IMR-90 (cell line): ENCODE measurements at regions of chr12 and their contacts with region 1.

Region 1: DNA sequence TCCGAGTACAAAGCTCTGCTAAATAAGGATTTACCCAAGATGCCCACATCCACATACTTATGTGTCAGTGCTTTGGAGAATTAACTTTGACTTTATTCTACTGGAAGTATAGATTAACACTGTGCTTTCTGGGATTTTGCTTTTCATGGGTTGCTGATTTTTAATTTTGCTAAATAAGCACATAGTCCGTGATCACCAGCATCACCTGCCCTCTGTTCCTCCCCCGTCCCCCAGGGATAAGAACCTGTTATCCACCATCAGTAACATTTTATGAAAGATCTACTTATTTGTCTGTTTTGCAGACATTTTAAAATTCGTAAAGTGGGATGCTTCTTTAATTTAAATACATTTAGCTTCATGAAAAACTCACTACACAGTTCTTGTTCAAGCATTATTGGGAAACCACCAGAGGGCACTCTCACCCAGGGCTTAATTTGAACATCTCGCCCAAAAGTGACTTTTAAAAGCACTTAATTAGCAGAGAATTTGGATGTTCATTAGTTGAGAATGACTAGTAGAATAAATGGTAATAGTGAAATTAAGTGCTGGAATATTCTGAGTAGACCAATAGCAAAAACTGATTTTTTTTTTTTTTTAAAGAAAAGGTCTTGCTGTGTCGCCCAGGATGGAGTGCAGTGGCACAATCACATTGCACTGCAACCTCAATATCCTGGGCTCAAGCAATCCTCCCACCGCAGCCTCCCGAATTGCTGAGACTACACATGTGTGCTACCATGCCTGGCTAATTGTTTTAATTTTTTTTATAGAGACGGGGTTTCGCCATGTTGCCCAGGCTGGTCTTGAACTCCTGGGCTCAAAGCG is 35.7 kb downstream of the MRPL42 start:
- DNase-seq: peak; percentile 48
- ATAC-seq: no peak
- H3K4me3 ChIP-seq: no peak overlapping the region
- H3K27ac ChIP-seq: no peak overlapping the region
- H3K4me1 ChIP-seq: 0 out of 2 replicates have a peak, but pooled peaks cover 1% of the 10 kb centered on the region
- H3K27me3 ChIP-seq: no peaks in the 10 kb centered on the region
- CTCF ChIP-seq: peak; percentile 77
- POLR2A ChIP-seq: no peak
- RAD21 ChIP-seq: peak; percentile 85

Region 2: DNA sequence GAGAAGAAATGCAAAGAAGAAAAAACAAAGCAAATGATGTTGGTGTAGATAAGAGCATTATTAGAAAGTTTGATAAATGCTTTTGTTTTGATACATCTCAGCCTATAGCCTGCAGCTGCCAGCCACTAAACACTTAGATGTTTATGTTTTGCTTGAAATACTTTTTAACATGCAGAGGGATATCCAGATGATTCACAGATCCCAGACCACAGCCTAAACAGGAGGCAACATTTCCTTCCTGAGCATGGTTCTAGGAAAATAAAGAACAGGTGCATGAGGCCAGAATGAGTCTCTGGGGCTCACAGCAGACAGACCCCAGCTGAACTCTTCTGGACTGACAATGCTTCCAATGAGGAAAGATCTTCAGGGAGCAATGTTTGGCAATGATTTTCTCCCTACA is 470.3 kb before region 1 on chr12:
- CTCF ChIA-PET with region 1: no interaction called
- POLR2A ChIA-PET with region 1: no interaction called
- dilution Hi-C with region 1: no loop called
- in situ Hi-C with region 1: no loop called
- intact Hi-C with region 1: no loop called
- DNase-seq: peak; percentile 63
- ATAC-seq: peak; percentile 51
- H3K4me3 ChIP-seq: no peak overlapping the region
- H3K27ac ChIP-seq: no peak overlapping the region
- H3K4me1 ChIP-seq: no peaks in the 10 kb centered on the region
- H3K27me3 ChIP-seq: peaks cover 14% of the 10 kb centered on the region
- CTCF ChIP-seq: no peak
- POLR2A ChIP-seq: no peak
- RAD21 ChIP-seq: no peak

Region 3: GRCh38 chr12:93484315-93484981 is 18.6 kb before region 1 on chr12:
- CTCF ChIA-PET with region 1: interaction called, 11 read pairs
- POLR2A ChIA-PET with region 1: no interaction called
- dilution Hi-C with region 1: no loop called
- in situ Hi-C with region 1: no loop called
- intact Hi-C with region 1: no loop called
- DNase-seq: peak; percentile 33
- ATAC-seq: peak; percentile 80
- H3K4me3 ChIP-seq: no peak overlapping the region
- H3K27ac ChIP-seq: 0 out of 2 replicates have a peak overlapping the region, but pooled peaks have one; percentile 57
- H3K4me1 ChIP-seq: peaks cover 10% of the 10 kb centered on the region
- H3K27me3 ChIP-seq: no peaks in the 10 kb centered on the region
- CTCF ChIP-seq: no peak
- POLR2A ChIP-seq: no peak
- RAD21 ChIP-seq: no peak

Region 4: GRCh38 chr12:93682846-93683261 is 179.8 kb after region 1 on chr12:
- CTCF ChIA-PET with region 1: no interaction called
- POLR2A ChIA-PET with region 1: no interaction called
- dilution Hi-C with region 1: no loop called
- in situ Hi-C with region 1: no loop called
- intact Hi-C with region 1: loop called (anchors 10 kb)
- DNase-seq: no peak
- ATAC-seq: no peak
- H3K4me3 ChIP-seq: no peak overlapping the region
- H3K27ac ChIP-seq: no peak overlapping the region
- H3K4me1 ChIP-seq: 0 out of 2 replicates have a peak, but pooled peaks cover under 1% of the 10 kb centered on the region
- H3K27me3 ChIP-seq: no peaks in the 10 kb centered on the region
- CTCF ChIP-seq: no peak
- POLR2A ChIP-seq: no peak
- RAD21 ChIP-seq: no peak

Region 5: DNA sequence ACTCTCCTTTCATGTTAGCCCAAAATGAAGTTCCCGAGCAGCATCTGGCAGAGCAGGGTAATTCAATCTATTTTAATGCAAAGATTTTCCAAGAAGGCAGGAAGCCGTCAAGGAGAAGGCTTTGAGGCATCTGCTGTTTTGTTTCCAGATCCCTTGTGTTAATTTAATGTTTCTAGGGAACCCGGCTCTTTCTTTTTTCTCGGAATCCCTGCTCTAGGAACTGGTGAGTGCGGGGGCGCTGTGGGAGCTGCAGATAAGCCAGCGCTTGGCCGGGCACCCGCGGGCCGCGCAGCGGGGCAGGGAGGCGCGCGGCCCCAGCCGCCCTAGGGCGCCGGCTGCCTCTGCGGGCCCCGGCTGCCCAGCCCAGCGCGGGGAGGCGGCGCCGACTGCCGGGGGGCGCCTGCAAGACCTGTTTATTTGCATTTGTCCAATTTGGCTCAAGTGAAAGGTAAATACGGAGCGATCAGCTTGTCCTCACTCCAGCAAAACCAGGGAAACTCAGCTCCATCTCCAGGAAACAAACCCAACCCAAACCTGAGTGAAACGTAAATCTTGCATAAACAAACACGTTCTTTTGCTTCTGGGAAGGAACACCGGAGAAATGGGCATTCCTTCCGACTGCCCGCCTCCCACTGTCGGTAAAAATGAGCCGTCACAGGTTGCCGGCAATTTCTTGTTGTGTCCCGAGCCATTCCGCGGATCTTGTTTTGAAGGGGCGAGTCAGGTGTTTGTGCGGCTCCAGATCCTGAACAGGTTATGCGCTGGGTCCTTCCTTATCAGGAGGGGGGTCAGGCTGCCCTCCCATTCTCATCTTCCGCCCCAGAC is 239.3 kb after region 1 on chr12:
- CTCF ChIA-PET with region 1: interaction called, 3 read pairs
- POLR2A ChIA-PET with region 1: no interaction called
- dilution Hi-C with region 1: no loop called
- in situ Hi-C with region 1: no loop called
- intact Hi-C with region 1: loop called (anchors 2 kb)
- DNase-seq: peak; percentile 60
- ATAC-seq: peak; percentile 97
- H3K4me3 ChIP-seq: peak overlapping the region; percentile 65
- H3K27ac ChIP-seq: peak overlapping the region; percentile 65
- H3K4me1 ChIP-seq: peaks cover 5% of the 10 kb centered on the region
- H3K27me3 ChIP-seq: no peaks in the 10 kb centered on the region
- CTCF ChIP-seq: peak; percentile 57
- POLR2A ChIP-seq: 0 out of 2 replicates have a peak, but pooled peaks have one; percentile 21
- RAD21 ChIP-seq: peak; percentile 69

Region 6: DNA sequence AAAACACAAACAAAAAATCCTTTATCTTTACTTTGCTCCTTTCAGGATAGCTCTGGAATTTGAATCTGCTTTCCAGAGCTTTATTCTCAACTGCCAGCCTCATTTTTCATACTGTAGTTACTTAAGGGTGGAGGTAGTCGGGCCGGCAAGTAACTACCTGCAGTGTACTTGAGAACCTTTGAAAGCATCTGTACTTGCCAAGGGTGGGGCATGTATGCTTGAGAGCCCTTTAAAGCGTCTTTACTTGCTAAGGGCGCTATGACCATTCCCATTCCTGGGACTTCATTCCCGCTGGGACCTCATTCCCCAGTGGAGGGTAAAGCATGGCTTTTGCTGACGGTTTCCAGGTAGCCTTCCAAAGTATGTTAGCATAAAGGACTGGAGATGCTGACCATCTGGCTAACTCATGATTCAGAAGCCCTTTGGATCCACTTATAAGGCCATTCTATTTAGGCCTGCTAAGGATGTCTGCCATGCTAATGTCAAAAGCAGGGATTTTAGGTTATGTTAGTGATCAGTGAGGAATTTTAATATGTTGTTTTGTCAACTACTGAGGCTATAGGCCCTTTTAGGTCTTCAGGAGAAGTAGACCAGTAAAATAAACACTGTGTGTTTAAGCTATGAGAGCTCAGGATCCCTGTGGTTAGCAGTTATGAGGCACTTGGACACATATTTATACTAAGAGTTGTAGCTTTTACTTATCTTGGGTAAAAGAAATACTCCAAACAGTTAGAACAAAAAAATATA is 249.0 kb after region 1 on chr12:
- CTCF ChIA-PET with region 1: interaction called, 5 read pairs
- POLR2A ChIA-PET with region 1: no interaction called
- dilution Hi-C with region 1: no loop called
- in situ Hi-C with region 1: loop called (anchors 10 kb)
- intact Hi-C with region 1: no loop called
- DNase-seq: peak; percentile 97
- ATAC-seq: peak; percentile 99
- H3K4me3 ChIP-seq: no peak overlapping the region
- H3K27ac ChIP-seq: peak overlapping the region; percentile 86
- H3K4me1 ChIP-seq: peaks cover 10% of the 10 kb centered on the region
- H3K27me3 ChIP-seq: no peaks in the 10 kb centered on the region; the same call in 1 of the 2 replicates
- CTCF ChIP-seq: no peak
- POLR2A ChIP-seq: no peak
- RAD21 ChIP-seq: no peak

Region 7: DNA sequence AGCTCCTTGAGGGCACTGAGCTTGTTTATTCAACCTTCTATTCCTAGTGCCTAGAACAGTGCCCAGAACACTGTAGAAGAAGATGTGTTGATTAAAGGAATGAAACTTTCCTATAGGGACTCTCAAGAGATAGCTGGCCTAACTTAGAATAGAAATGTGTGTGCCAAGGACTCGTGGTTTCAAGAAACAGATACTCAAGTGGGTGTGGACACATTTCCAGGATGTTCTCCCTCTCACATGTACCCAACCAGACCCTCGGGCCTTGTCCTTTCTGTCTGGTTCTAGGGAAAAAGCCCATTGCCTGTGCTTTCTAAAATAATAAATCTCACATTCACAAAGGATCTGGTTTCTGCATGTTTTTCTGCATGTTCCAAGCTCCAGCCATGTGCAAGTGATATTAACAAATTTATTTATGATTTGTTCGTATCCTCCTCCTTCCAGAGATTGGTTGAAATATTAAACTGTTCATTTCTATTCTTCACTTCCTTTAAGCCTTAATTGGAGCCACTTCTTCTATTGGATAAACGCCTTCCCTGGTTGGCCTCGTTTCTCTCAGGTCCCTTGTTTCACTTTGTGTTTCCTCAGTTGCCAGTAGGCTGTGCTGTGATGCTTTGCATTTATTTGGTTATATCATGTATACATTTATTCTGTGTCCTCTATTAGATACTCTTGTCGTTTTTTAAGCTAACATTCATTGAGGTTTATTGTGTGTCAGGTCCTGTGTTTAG is 263.9 kb after region 1 on chr12:
- CTCF ChIA-PET with region 1: interaction called, 3 read pairs
- POLR2A ChIA-PET with region 1: no interaction called
- dilution Hi-C with region 1: no loop called
- in situ Hi-C with region 1: no loop called
- intact Hi-C with region 1: loop called (anchors 5 kb)
- DNase-seq: peak; percentile 76
- ATAC-seq: peak; percentile 92
- H3K4me3 ChIP-seq: no peak overlapping the region
- H3K27ac ChIP-seq: no peak overlapping the region
- H3K4me1 ChIP-seq: peaks cover 2% of the 10 kb centered on the region; the same call in 1 of the 2 replicates
- H3K27me3 ChIP-seq: no peaks in the 10 kb centered on the region
- CTCF ChIP-seq: peak; percentile 79
- POLR2A ChIP-seq: no peak
- RAD21 ChIP-seq: peak; percentile 90

Region 8: GRCh38 chr12:93979189-93979588 is 476.2 kb after region 1 on chr12:
- CTCF ChIA-PET with region 1: no interaction called
- POLR2A ChIA-PET with region 1: no interaction called
- dilution Hi-C with region 1: no loop called
- in situ Hi-C with region 1: no loop called
- intact Hi-C with region 1: loop called (anchors 2 kb)
- DNase-seq: peak; percentile 38
- ATAC-seq: no peak
- H3K4me3 ChIP-seq: no peak overlapping the region
- H3K27ac ChIP-seq: no peak overlapping the region
- H3K4me1 ChIP-seq: peaks cover 15% of the 10 kb centered on the region
- H3K27me3 ChIP-seq: no peaks in the 10 kb centered on the region
- CTCF ChIP-seq: peak; percentile 54
- POLR2A ChIP-seq: no peak
- RAD21 ChIP-seq: peak; percentile 66